ENCODE measurements at regions of chr1 and their contacts with region 1.

Region 1: GRCh38 chr1:40951943-40952743 is 27.4 kb upstream of the CTPS1 start:
- DNase-seq: peak; percentile 58
- H3K4me3 ChIP-seq: no peak overlapping the region
- H3K27ac ChIP-seq: no peak overlapping the region
- H3K4me1 ChIP-seq: peaks cover 13% of the 10 kb centered on the region
- H3K27me3 ChIP-seq: no peaks in the 10 kb centered on the region
- CTCF ChIP-seq: peak; percentile 92 to 97

Region 2: DNA sequence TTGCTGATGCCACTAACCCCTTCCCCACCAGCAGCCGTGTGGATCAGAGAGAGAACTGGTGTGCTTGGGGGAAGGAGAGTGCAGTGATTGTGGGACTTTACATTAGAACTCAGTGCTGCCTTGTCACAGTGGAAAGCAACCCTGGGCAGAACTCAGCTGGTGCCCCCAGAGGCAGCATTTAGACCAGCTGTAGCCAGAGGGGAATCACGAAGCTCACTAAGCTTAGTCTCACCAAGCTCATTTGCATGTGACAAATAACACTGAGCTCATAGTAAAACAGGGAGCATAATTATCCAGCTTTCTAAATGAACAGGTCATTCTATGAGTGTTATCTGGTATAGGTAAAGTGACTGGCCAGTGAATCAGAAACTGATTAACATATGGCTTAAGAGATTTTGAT is 588.4 kb before region 1 on chr1:
- CTCF ChIA-PET with region 1: no interaction called
- dilution Hi-C with region 1: no loop called
- in situ Hi-C with region 1: no loop called
- intact Hi-C with region 1: no loop called
- DNase-seq: no peak
- H3K4me3 ChIP-seq: no peak overlapping the region
- H3K27ac ChIP-seq: no peak overlapping the region
- H3K4me1 ChIP-seq: no peaks in the 10 kb centered on the region
- H3K27me3 ChIP-seq: no peaks in the 10 kb centered on the region
- CTCF ChIP-seq: no peak

Region 3: DNA sequence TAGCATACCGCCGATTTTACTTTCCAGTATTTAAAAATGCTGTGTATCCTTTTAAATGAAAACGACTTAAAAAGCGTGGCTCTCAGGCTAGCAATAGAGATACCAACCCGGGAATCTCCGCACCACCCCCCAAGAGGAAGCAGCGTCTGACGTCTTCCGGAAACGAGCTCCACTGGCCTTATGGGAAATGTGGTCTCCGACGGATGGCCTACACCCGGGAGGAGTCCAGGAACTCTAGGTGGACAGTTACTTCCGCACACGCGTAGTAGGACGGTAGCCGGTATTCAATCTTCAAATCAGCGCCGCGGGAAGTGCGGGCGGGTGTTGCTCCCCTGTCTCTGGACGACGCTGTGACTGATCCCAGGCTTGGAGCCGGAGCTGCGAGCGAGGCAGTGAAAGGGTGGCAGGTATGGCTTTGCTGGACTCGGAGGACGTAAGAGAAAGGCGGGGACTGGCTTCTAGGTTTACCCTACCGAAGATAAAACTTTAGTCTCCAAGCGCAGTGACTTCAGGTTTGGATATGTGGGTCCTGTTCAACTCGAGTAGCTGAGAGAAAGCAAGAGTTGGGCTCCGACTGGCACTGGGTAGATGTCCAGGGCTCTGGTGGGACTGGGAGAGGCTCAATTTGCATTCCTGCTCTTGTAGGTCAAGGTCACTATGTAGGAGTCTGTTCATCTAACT is 420.6 kb before region 1 on chr1 and contains the start of gene ZNF684:
- CTCF ChIA-PET with region 1: no interaction called
- dilution Hi-C with region 1: no loop called
- in situ Hi-C with region 1: no loop called
- intact Hi-C with region 1: loop called (anchors 5 kb)
- DNase-seq: peak; percentile 97
- H3K4me3 ChIP-seq: peak within 1 kb of the TSS; percentile 49 to 68 (median 61)
- H3K27ac ChIP-seq: peak within 1 kb of the TSS; percentile 63
- H3K4me1 ChIP-seq: peaks cover 10% of the 10 kb centered on the region
- H3K27me3 ChIP-seq: no peaks in the 10 kb centered on the region
- CTCF ChIP-seq: no peak
- total RNA-seq, gene ZNF684: 3.7 to 4.1 TPM

Region 4: DNA sequence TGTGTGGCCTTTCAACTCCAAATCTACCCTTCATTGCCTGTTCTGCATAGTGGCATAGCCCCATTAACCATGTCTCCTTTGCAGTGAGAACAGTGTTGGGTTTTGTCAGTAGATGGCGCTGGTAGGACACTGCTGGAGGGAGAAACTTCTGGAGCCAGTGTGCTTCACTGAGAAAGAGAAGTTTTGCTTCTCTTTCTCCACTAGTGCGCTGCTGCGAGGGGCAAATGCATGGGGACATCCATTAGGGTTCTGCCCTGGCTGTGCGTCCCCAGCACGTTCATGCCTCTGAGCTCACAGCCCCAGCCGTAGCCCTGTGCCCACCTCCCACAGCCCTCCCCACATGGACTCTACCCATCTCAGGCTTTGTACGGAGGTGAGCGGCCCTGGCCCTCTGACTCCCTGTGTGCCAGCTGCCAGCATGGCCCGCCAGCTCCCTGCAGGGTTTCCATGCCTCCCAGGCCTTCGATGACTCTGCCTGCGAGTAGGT is 339.8 kb before region 1 on chr1:
- CTCF ChIA-PET with region 1: no interaction called
- dilution Hi-C with region 1: no loop called
- in situ Hi-C with region 1: loop called in 1 of 2 experiments (anchors 25 kb)
- intact Hi-C with region 1: loop called (anchors 1 kb)
- DNase-seq: peak; percentile 68
- H3K4me3 ChIP-seq: peak overlapping the region in 1 of 3 experiments; percentile 16
- H3K27ac ChIP-seq: no peak overlapping the region
- H3K4me1 ChIP-seq: peaks cover 5% of the 10 kb centered on the region
- H3K27me3 ChIP-seq: no peaks in the 10 kb centered on the region
- CTCF ChIP-seq: peak; percentile 97 to 99

Region 5: GRCh38 chr1:40774266-40774998 is 177.7 kb before region 1 on chr1:
- CTCF ChIA-PET with region 1: interaction called, 3 read pairs
- dilution Hi-C with region 1: no loop called
- in situ Hi-C with region 1: no loop called
- intact Hi-C with region 1: loop called (anchors 1 kb)
- DNase-seq: no peak
- H3K4me3 ChIP-seq: no peak overlapping the region
- H3K27ac ChIP-seq: no peak overlapping the region
- H3K4me1 ChIP-seq: peaks cover 13% of the 10 kb centered on the region
- H3K27me3 ChIP-seq: no peaks in the 10 kb centered on the region
- CTCF ChIP-seq: peak; percentile 83 to 84

Region 6: DNA sequence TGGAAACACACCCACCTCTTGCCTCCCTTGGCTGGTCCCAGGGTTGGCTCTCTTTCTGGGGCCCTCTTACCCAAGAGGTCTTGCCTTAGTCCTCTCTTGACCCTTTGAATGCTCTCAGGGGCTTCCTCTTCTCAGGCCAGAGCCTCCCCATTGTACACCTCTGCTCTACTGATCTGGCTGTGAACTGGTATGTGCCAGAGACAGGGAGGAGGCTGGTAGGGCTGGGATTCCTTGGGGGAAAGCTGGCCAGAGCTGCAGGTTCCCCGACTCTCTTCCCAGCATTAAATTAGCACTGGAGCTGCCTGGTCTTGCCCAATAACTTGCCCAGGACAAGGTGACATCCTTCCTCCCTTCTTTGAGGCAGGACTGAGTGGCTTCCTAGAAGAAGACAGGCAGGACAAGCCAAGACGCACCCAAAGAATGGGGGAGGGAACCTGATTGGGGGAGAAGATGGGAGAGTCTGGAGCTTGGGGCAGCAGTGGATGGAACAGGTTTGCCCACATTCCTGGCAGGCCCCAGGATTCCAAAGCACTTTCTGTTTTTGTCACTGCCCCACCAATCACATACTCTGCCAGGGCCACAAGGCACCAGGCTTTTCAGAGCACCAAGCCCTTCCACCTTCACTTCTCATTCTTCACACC is 52.8 kb before region 1 on chr1:
- CTCF ChIA-PET with region 1: no interaction called
- dilution Hi-C with region 1: no loop called
- in situ Hi-C with region 1: no loop called
- intact Hi-C with region 1: loop called (anchors 1 kb)
- DNase-seq: peak; percentile 95
- H3K4me3 ChIP-seq: no peak overlapping the region
- H3K27ac ChIP-seq: peak overlapping the region; percentile 79
- H3K4me1 ChIP-seq: peaks cover 55% of the 10 kb centered on the region
- H3K27me3 ChIP-seq: no peaks in the 10 kb centered on the region
- CTCF ChIP-seq: no peak

Region 7: DNA sequence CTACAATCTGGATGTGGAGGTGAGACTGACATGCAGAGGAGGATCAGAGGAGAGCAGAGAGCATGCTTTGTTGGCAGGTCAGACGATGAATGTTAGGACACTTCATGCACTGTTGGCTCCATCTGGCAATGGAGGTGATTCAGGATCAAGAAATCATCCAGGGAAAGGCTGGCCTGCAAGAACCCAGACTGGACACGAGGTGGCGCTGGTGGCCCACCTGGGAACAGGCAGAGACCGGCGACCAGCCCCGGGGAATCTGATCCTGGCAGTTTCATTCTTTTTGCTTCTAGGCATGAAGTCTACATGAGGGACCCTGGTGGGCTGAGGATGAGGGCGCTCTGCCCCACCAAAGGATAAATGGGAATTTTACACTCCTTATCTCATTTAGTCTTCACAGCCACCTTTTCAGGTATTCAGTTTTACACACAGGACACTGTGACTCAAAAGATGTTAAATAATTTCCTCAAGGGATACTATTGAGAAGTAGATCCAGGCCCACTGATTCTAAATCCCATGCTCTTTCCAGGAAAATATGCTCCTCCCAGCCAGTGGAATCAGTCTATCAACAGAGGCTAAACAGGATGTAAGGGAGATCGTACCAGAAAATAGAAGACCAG is 316.1 kb after region 1 on chr1:
- CTCF ChIA-PET with region 1: no interaction called
- dilution Hi-C with region 1: no loop called
- in situ Hi-C with region 1: no loop called
- intact Hi-C with region 1: no loop called
- DNase-seq: peak; percentile 50
- H3K4me3 ChIP-seq: no peak overlapping the region
- H3K27ac ChIP-seq: no peak overlapping the region
- H3K4me1 ChIP-seq: no peaks in the 10 kb centered on the region
- H3K27me3 ChIP-seq: no peaks in the 10 kb centered on the region
- CTCF ChIP-seq: peak; percentile 94 to 98

Region 8: DNA sequence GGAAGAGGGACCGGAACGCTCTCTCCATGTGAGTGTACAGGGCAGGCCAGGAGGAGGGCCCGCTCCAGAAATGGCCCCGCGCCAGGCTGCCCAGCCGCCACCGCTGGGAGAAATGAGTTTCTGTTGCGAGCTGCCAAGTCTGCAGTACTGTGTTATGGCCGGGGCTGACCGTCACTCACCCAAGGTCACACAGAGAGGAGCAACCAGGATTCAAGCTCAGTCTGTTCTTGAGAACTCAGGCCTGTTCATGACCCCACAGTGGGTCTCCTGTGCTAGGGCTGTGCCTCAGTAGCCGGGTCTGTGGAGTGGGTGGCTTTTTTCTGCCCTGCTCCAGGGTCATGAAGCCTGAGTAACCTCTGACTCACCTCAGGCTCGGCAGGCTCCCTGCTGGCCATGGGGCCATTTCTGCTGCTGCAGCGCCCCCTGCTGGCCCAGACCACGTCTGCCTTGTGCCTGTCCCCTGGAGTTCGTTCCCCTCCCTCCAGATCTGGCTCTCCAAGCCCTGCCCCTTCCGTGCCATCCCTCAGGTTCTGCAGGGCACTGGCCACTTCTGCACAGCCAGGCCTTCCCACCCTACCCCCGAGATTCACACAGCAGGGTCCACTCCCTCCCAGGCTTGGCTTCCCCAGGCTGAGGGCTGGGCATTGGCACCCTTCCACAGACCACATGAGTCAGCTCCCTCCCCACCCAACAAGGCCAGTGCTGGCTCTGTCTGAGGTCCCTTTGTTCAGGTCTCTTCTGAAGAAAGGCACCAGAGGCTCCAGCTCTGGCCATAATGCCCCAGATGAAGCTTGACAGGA is 480.5 kb after region 1 on chr1:
- CTCF ChIA-PET with region 1: no interaction called
- dilution Hi-C with region 1: no loop called
- in situ Hi-C with region 1: no loop called
- intact Hi-C with region 1: loop called (anchors 2 kb)
- DNase-seq: peak; percentile 93
- H3K4me3 ChIP-seq: peak overlapping the region in 1 of 3 experiments; percentile 18
- H3K27ac ChIP-seq: peak overlapping the region; percentile 37
- H3K4me1 ChIP-seq: peaks cover 21% of the 10 kb centered on the region
- H3K27me3 ChIP-seq: no peaks in the 10 kb centered on the region
- CTCF ChIP-seq: peak; percentile 93 to 95

Measured in mammary epithelial cell (primary cell).